Endothelial cell of umbilical vein (primary cell): ENCODE measurements at regions of chr14 and their contacts with region 1.

Region 1: DNA sequence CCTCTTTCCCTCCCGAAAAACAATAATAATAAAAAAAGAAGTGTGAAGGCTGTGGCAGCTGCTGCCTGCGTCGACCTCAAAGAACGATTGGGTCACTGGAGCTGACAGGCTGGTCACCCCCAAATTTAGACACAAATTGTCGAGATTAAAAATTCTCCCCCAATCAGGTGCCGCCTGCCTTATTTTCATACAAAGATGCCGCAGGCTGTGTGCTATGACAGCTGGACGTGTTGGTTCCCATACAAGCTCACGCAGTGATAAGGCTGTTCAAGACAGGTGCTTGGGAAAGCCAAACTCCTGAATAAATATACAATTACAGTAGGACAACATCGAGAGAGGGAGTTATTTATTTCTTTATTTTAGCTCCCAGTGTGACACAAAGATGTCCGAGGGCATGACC is 1041.8 kb downstream of the VRK1 start:
- DNase-seq: no peak
- H3K4me3 ChIP-seq: no peak overlapping the region
- H3K27ac ChIP-seq: no peak overlapping the region
- H3K4me1 ChIP-seq: no peaks in the 10 kb centered on the region
- H3K27me3 ChIP-seq: no peaks in the 10 kb centered on the region
- CTCF ChIP-seq: no peak
- POLR2A ChIP-seq: no peak

Region 2: GRCh38 chr14:98008381-98009113 is 169.6 kb after region 1 on chr14:
- CTCF ChIA-PET with region 1: no interaction called
- POLR2A ChIA-PET with region 1: no interaction called
- dilution Hi-C with region 1: no loop called
- intact Hi-C with region 1: no loop called
- DNase-seq: no peak
- H3K4me3 ChIP-seq: no peak overlapping the region
- H3K27ac ChIP-seq: no peak overlapping the region
- H3K4me1 ChIP-seq: no peaks in the 10 kb centered on the region
- H3K27me3 ChIP-seq: no peaks in the 10 kb centered on the region
- CTCF ChIP-seq: no peak
- POLR2A ChIP-seq: no peak

Region 3: GRCh38 chr14:99174081-99174851 is 1335.3 kb after region 1 on chr14:
- CTCF ChIA-PET with region 1: no interaction called
- POLR2A ChIA-PET with region 1: no interaction called
- dilution Hi-C with region 1: no loop called
- intact Hi-C with region 1: loop called (anchors 5 kb)
- DNase-seq: no peak
- H3K4me3 ChIP-seq: no peak overlapping the region
- H3K27ac ChIP-seq: no peak overlapping the region
- H3K4me1 ChIP-seq: no peaks in the 10 kb centered on the region
- H3K27me3 ChIP-seq: no peaks in the 10 kb centered on the region
- CTCF ChIP-seq: no peak
- POLR2A ChIP-seq: no peak